Endothelial cell of umbilical vein (primary cell): ENCODE measurements at regions of chr14 and their contacts with region 1.

Region 1: GRCh38 chr14:20690848-20691523 is 2.4 kb downstream of the ANG start:
- DNase-seq: peak; percentile 77
- H3K4me3 ChIP-seq: no peak overlapping the region
- H3K27ac ChIP-seq: no peak overlapping the region
- H3K4me1 ChIP-seq: peaks cover 7% of the 10 kb centered on the region
- H3K27me3 ChIP-seq: no peaks in the 10 kb centered on the region
- CTCF ChIP-seq: peak; percentile 72 to 79
- POLR2A ChIP-seq: no peak

Region 2: GRCh38 chr14:20327005-20327869 is 363.7 kb before region 1 on chr14:
- CTCF ChIA-PET with region 1: interaction called, 8 read pairs
- POLR2A ChIA-PET with region 1: no interaction called
- dilution Hi-C with region 1: no loop called
- intact Hi-C with region 1: loop called (anchors 1 kb)
- DNase-seq: peak; percentile 75
- H3K4me3 ChIP-seq: no peak overlapping the region
- H3K27ac ChIP-seq: no peak overlapping the region
- H3K4me1 ChIP-seq: peaks cover 18% of the 10 kb centered on the region
- H3K27me3 ChIP-seq: no peaks in the 10 kb centered on the region
- CTCF ChIP-seq: peak; percentile 42 to 56
- POLR2A ChIP-seq: no peak

Region 3: GRCh38 chr14:20530771-20531571 is 160.0 kb before region 1 on chr14:
- CTCF ChIA-PET with region 1: interaction called, 4 read pairs
- POLR2A ChIA-PET with region 1: no interaction called
- dilution Hi-C with region 1: no loop called
- intact Hi-C with region 1: loop called (anchors 10 kb)
- DNase-seq: peak; percentile 71
- H3K4me3 ChIP-seq: no peak overlapping the region
- H3K27ac ChIP-seq: no peak overlapping the region
- H3K4me1 ChIP-seq: no peaks in the 10 kb centered on the region
- H3K27me3 ChIP-seq: peaks cover 4 to 28% of the 10 kb centered on the region in 2 experiments
- CTCF ChIP-seq: peak; percentile 67 to 72
- POLR2A ChIP-seq: no peak

Region 4: GRCh38 chr14:20657216-20658128 is 33.5 kb before region 1 on chr14:
- CTCF ChIA-PET with region 1: interaction called, 14 read pairs
- POLR2A ChIA-PET with region 1: no interaction called
- dilution Hi-C with region 1: no loop called
- intact Hi-C with region 1: no loop called
- DNase-seq: no peak
- H3K4me3 ChIP-seq: no peak overlapping the region
- H3K27ac ChIP-seq: no peak overlapping the region
- H3K4me1 ChIP-seq: peaks cover 2% of the 10 kb centered on the region
- H3K27me3 ChIP-seq: peaks cover 35 to 37% of the 10 kb centered on the region in 2 experiments
- CTCF ChIP-seq: no peak
- POLR2A ChIP-seq: no peak

Region 5: DNA sequence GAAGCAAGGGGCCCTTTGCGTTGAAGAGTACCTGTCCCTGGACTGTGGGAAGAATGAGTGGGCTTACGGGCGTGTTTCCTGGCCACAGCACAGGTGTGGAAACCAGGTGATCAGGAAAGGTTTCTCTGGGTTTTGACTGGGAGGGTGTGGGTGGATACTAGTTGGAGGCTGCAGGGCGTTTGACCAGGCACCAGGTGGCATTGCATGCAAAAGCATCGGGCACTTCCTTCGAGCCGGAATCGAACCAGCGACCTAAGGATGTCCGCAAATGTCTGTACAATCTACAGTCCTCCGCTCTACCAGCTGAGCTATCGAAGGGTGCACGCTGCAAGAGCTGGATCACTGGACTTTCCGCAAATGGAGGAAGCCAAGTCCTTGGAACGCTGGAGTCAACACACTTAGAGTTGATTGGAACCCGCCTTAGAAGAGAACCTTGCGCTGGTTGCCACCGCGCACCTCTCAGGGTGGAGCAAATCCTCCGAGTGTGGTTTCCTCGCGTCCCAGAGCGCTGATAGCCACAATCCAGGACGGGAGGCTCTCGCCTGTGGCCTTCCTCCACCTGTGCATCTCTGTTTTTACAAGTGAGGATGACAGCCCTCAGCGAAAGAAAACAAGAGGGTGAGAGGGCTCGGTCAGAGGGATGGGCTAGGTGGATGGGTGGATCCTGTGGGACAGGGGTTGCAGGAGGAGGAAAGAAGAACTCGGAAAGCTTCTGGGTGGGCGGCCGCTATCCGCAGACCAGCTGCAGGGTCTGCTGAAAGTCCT is 27.8 kb before region 1 on chr14:
- CTCF ChIA-PET with region 1: interaction called, 14 read pairs
- POLR2A ChIA-PET with region 1: no interaction called
- dilution Hi-C with region 1: no loop called
- intact Hi-C with region 1: loop called (anchors 1 kb)
- DNase-seq: peak; percentile 49
- H3K4me3 ChIP-seq: peak overlapping the region in 2 of 3 experiments; percentile 24 to 34
- H3K27ac ChIP-seq: no peak overlapping the region
- H3K4me1 ChIP-seq: no peaks in the 10 kb centered on the region
- H3K27me3 ChIP-seq: peaks cover 4 to 17% of the 10 kb centered on the region in 2 experiments
- CTCF ChIP-seq: peak; percentile 40 to 53
- POLR2A ChIP-seq: no peak

Region 6: GRCh38 chr14:20836668-20837338 is 145.8 kb after region 1 on chr14:
- CTCF ChIA-PET with region 1: no interaction called
- POLR2A ChIA-PET with region 1: no interaction called
- dilution Hi-C with region 1: no loop called
- intact Hi-C with region 1: no loop called
- DNase-seq: peak; percentile 47
- H3K4me3 ChIP-seq: no peak overlapping the region
- H3K27ac ChIP-seq: no peak overlapping the region
- H3K4me1 ChIP-seq: no peaks in the 10 kb centered on the region
- H3K27me3 ChIP-seq: no peaks in the 10 kb centered on the region
- CTCF ChIP-seq: peak; percentile 42 to 55
- POLR2A ChIP-seq: no peak